Right ventricle myocardium inferior (tissue), 1 donor: ENCODE measurements at regions of chr11 and their contacts with region 1.

Region 1: GRCh38 chr11:134853992-134854991 is 442.2 kb upstream of the B3GAT1 start:
- DNase-seq: no peak
- ATAC-seq: no peak

Region 2: DNA sequence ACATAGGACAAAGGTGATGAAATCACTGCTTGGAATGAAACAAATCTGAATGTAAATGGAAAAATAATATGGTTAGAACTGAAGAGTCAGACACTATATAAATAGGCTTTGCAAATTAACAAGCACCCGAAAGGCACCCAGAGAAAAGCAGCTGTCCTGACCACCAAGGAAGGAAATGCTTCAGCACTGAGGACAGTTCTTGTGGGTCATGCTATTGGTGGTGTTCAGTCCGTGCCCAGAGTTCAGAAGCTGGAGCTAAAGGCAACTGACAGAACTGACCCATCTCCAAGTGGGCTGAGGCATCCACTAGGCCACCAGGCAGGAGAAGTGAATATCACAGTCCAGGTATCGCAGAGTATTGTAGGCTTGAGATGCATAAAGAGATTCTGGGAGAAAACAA is 1530.9 kb before region 1 on chr11:
- intact Hi-C with region 1: loop called (anchors 10 kb)
- DNase-seq: no peak
- ATAC-seq: no peak